ENCODE measurements at regions of chr17 and their contacts with region 1.

Region 1: GRCh38 chr17:42832974-42833766 is at the start of gene PSME3:
- DNase-seq: peak; percentile 91
- H3K4me3 Mint-ChIP-seq: peak within 1 kb of the TSS; percentile 89
- H3K27ac Mint-ChIP-seq: peak within 1 kb of the TSS; percentile 92
- H3K4me1 Mint-ChIP-seq: peaks cover 26% of the 10 kb centered on the region
- H3K27me3 Mint-ChIP-seq: peaks cover 9% of the 10 kb centered on the region
- total RNA-seq, gene PSME3: 101 to 104 TPM

Region 2: GRCh38 chr17:42819944-42820535 is 13.1 kb before region 1 on chr17:
- CTCF ChIA-PET with region 1: interaction called, 48 read pairs
- POLR2A ChIA-PET with region 1: interaction called, 59 read pairs
- DNase-seq: peak; percentile 74
- H3K4me3 Mint-ChIP-seq: no peak overlapping the region
- H3K27ac Mint-ChIP-seq: no peak overlapping the region
- H3K4me1 Mint-ChIP-seq: peaks cover 36% of the 10 kb centered on the region
- H3K27me3 Mint-ChIP-seq: no peaks in the 10 kb centered on the region

Region 3: DNA sequence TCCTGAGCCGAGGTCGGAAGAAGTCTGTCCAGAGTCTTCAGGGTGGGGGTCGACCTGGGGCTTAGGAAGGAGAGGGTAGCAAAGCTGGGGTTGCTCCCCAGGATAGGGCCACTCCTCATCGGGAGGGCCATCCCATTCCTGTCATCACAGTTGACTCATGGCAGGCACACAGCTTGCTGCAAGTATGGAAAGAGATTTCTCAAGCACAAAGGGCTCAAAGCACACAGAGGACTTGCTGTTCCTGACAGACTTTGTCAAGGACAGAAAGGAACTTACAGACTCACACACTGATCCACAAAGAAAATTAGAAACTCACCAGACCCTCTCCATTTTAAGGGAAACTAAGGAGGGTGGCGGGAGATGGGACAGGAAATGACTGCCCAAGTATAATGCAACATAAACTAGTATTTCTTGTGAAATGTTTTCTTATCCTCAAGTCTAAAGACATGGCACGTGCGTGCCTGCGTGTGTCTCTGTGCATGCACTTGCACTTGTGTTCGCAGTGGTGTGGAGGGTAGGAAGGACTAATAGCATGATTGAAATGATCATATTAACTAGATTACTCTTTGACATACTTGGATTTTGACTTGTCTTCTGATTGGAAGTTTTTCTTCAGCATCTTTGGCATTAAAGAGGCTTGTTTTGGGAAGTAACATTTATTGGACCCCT is 13.6 kb after region 1 on chr17:
- CTCF ChIA-PET with region 1: no interaction called
- POLR2A ChIA-PET with region 1: interaction called, 37 read pairs
- DNase-seq: no peak
- H3K4me3 Mint-ChIP-seq: no peak overlapping the region
- H3K27ac Mint-ChIP-seq: no peak overlapping the region
- H3K4me1 Mint-ChIP-seq: peaks cover 14% of the 10 kb centered on the region
- H3K27me3 Mint-ChIP-seq: no peaks in the 10 kb centered on the region

Measured in activated CD4-positive, alpha-beta memory T cell treated with anti-CD3 and anti-CD28 coated beads, Interleukin-2, amount 10 ng/mL, durations not matched to agents 7 days and 5 days (primary cell).